GM12878 (cell line): ENCODE measurements at regions of chr11 and their contacts with region 1.

Region 1: GRCh38 chr11:87081358-87081757 is 43.6 kb downstream of the TMEM135 start:
- DNase-seq: peak; percentile 34
- ATAC-seq: peak; percentile 76
- H3K4me3 ChIP-seq: peak overlapping the region; percentile 58; the same call in 1 of the 2 replicates
- H3K27ac ChIP-seq: peak overlapping the region; percentile 72
- H3K4me1 ChIP-seq: peaks cover 4% of the 10 kb centered on the region; the same call in 1 of the 2 replicates
- H3K27me3 ChIP-seq: no peaks in the 10 kb centered on the region
- CTCF ChIP-seq: no peak
- EP300 ChIP-seq: no peak
- POLR2A ChIP-seq: no peak
- RAD21 ChIP-seq: no peak

Region 2: GRCh38 chr11:87097582-87097981 is 16.2 kb after region 1 on chr11:
- CTCF ChIA-PET with region 1: interaction called, 18 read pairs
- POLR2A ChIA-PET with region 1: interaction called, 3 read pairs
- RAD21 ChIA-PET with region 1: no interaction called
- SMC1A ChIA-PET with region 1: interaction called, 5 read pairs
- in situ Hi-C with region 1: no loop called
- intact Hi-C with region 1: no loop called
- DNase-seq: no peak
- ATAC-seq: peak; percentile 93
- H3K4me3 ChIP-seq: no peak overlapping the region
- H3K27ac ChIP-seq: no peak overlapping the region
- H3K4me1 ChIP-seq: no peaks in the 10 kb centered on the region
- H3K27me3 ChIP-seq: no peaks in the 10 kb centered on the region
- CTCF ChIP-seq: peak; percentile 64 to 78 (median 68)
- EP300 ChIP-seq: no peak
- POLR2A ChIP-seq: no peak
- RAD21 ChIP-seq: peak; percentile 25; the same call in 1 of the 2 replicates

Region 3: GRCh38 chr11:87819151-87819550 is 737.8 kb after region 1 on chr11:
- CTCF ChIA-PET with region 1: no interaction called
- POLR2A ChIA-PET with region 1: no interaction called
- RAD21 ChIA-PET with region 1: no interaction called
- SMC1A ChIA-PET with region 1: no interaction called
- in situ Hi-C with region 1: no loop called
- intact Hi-C with region 1: no loop called
- DNase-seq: no peak
- ATAC-seq: no peak
- H3K4me3 ChIP-seq: no peak overlapping the region
- H3K27ac ChIP-seq: no peak overlapping the region
- H3K4me1 ChIP-seq: no peaks in the 10 kb centered on the region
- H3K27me3 ChIP-seq: no peaks in the 10 kb centered on the region; a peak in 1 of 4 replicates
- CTCF ChIP-seq: no peak
- EP300 ChIP-seq: no peak
- POLR2A ChIP-seq: no peak
- RAD21 ChIP-seq: no peak